Activated CD8-positive, alpha-beta T cell treated with anti-CD3 and anti-CD28 coated beads for 36 hours (primary cell): ENCODE measurements at regions of chr19 and their contacts with region 1.

Region 1: DNA sequence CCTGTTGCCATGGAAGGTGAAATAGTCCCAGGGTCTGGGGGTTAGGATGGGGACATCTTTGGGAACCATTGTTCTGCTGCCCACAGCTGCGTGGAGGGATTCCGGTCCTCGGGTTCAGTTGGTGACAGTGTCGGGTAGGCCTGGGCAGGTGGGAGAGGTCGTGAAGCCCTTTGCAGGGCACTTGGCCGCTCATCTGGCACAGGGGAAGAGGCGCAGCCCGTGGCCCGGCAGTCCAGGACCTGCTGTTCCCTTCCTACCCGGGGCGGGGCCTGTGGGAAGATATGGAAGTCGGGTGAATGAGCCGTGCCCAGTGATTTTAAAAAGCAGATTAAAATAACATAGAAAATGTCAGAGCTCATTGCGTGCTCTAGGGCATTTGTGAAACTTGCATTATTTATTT is 44.8 kb downstream of the KDM4B start:
- DNase-seq: no peak
- ATAC-seq: no peak
- H3K4me3 Mint-ChIP-seq: no peak overlapping the region
- H3K27ac Mint-ChIP-seq: no peak overlapping the region
- H3K4me1 Mint-ChIP-seq: no peaks in the 10 kb centered on the region
- H3K27me3 Mint-ChIP-seq: no peaks in the 10 kb centered on the region
- CTCF ChIP-seq: no peak

Region 2: GRCh38 chr19:4930664-4931063 is 83.1 kb before region 1 on chr19:
- CTCF ChIA-PET with region 1: no interaction called
- POLR2A ChIA-PET with region 1: no interaction called
- intact Hi-C with region 1: no loop called
- DNase-seq: peak; percentile 14
- ATAC-seq: no peak
- H3K4me3 Mint-ChIP-seq: no peak overlapping the region
- H3K27ac Mint-ChIP-seq: no peak overlapping the region
- H3K4me1 Mint-ChIP-seq: peaks cover 5% of the 10 kb centered on the region
- H3K27me3 Mint-ChIP-seq: no peaks in the 10 kb centered on the region
- CTCF ChIP-seq: no peak

Region 3: GRCh38 chr19:4988770-4989251 is 24.9 kb before region 1 on chr19:
- CTCF ChIA-PET with region 1: no interaction called
- POLR2A ChIA-PET with region 1: no interaction called
- intact Hi-C with region 1: no loop called
- DNase-seq: no peak
- ATAC-seq: no peak
- H3K4me3 Mint-ChIP-seq: no peak overlapping the region
- H3K27ac Mint-ChIP-seq: peak overlapping the region; percentile 15
- H3K4me1 Mint-ChIP-seq: peaks cover 15% of the 10 kb centered on the region
- H3K27me3 Mint-ChIP-seq: no peaks in the 10 kb centered on the region
- CTCF ChIP-seq: no peak

Region 4: DNA sequence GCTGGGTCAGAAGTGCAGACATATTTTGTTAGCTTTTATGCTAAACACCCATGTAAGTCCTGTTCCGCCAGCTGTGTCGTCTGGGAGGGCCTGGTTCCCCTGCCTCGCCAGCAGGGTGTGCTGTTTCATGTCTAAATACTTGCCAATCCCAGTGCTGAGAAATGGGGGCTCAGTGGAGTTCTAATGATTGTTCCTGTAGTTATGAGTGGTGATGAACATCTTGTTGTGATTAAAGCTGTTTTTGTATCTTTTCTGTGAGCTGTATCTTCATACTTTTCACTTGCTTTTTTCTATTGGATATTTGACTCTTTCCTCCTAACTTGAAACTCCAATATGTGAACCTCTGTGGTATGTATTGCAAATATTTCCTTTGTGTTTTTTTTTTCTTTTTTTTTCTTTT is 12.1 kb before region 1 on chr19:
- CTCF ChIA-PET with region 1: interaction called, 13 read pairs
- POLR2A ChIA-PET with region 1: no interaction called
- intact Hi-C with region 1: no loop called
- DNase-seq: peak; percentile 44
- ATAC-seq: peak; percentile 47
- H3K4me3 Mint-ChIP-seq: no peak overlapping the region
- H3K27ac Mint-ChIP-seq: no peak overlapping the region
- H3K4me1 Mint-ChIP-seq: peaks cover 5% of the 10 kb centered on the region
- H3K27me3 Mint-ChIP-seq: no peaks in the 10 kb centered on the region
- CTCF ChIP-seq: peak; percentile 58

Region 5: GRCh38 chr19:5038631-5039271 is 25.0 kb after region 1 on chr19:
- CTCF ChIA-PET with region 1: no interaction called
- POLR2A ChIA-PET with region 1: no interaction called
- intact Hi-C with region 1: no loop called
- DNase-seq: no peak
- ATAC-seq: peak; percentile 68
- H3K4me3 Mint-ChIP-seq: no peak overlapping the region
- H3K27ac Mint-ChIP-seq: no peak overlapping the region
- H3K4me1 Mint-ChIP-seq: no peaks in the 10 kb centered on the region
- H3K27me3 Mint-ChIP-seq: no peaks in the 10 kb centered on the region
- CTCF ChIP-seq: peak; percentile 62